Pancreas (tissue), 10 donors: ENCODE measurements at regions of chr11 and their contacts with region 1.

Region 1: DNA sequence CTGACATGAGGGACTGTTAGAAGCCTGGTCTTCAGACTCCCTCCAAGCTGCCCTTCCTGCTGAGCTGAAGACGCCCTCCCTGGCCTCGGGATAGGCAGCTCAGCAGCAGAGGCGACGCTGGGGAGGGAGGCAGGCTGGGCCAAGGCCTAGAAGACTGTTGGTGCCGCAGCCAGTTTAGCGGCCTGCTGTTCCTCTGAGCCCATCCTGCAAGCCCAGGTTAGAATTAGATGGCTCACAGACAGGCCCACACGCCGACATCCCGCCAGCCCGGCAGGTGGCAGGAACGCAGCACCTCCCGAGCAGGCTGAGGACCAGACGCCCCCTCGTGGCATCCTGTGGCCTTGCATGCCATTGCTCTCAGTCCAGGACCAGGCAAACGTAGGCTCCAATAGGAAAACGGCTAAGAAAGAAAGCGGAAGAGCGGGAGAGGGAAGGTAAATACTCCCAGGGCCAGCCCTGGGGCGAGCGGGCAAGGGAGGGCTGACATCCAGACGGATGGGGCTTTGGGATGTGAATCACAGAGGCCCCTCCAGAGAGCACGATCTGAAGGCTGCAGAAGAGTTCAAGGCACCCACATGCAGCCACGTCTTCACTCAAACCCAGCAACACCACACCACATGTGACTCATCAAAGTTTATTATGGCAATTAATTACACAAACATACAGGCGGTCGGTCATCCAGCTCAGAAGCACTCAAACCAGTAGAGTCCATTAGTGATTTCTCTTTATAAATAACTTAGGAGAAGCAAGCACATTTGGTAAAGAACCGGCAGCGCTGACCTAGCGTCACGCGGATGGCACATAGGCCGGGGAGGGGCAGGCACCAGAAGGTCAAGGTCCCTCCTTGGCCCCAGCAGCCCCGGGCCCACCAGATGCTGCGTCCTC is 27.6 kb downstream of the CD5 start:
- DNase-seq: peak; percentile 83 to 95 (median 91)
- ATAC-seq: peak; percentile 89 to 97 (median 94)
- H3K4me3 ChIP-seq: no peak overlapping the region
- H3K27ac ChIP-seq: peak overlapping the region in 2 of 4 donors; percentile 42 to 71
- H3K4me1 ChIP-seq: peaks cover 0 to 7% (median 0%) of the 10 kb centered on the region in 3 donors
- H3K27me3 ChIP-seq: no peaks in the 10 kb centered on the region
- CTCF ChIP-seq: peak; percentile 97 to 99 (median 98)

Region 2: DNA sequence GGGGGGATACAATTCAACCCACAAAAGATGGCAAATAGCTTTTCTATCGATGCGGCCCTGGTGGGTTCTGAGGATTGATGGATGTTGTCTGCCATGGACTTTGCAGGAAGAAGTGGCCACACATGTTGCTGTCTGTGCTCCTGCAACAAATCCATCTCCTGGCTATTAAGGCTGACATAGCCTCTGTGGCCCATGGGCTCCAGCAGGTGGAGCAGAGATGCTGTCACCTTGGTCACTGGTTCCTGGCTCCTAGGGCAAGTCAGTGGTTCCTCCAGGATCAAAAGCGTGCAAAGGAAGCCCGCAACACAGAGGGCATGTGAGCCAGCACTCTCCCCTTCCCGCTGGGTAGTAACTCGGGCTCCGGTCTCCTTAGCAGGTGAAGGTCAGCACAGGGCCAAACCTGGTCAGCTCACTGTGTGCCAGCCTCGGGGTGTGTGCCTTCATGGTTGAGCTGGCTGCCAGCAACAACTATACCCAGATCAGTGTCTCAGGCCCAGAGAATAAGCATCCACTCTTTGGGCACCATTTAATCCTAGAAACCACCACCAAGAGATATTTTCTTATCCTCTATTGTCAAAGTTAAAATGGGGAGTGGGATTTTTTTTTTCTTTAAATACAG is 304.2 kb before region 1 on chr11:
- intact Hi-C with region 1: loop called in 1 of 3 experiments (anchors 5 kb)
- DNase-seq: no peak
- ATAC-seq: no peak
- H3K4me3 ChIP-seq: no peak overlapping the region
- H3K27ac ChIP-seq: no peak overlapping the region
- H3K4me1 ChIP-seq: no peaks in the 10 kb centered on the region
- H3K27me3 ChIP-seq: no peaks in the 10 kb centered on the region
- CTCF ChIP-seq: no peak

Region 3: DNA sequence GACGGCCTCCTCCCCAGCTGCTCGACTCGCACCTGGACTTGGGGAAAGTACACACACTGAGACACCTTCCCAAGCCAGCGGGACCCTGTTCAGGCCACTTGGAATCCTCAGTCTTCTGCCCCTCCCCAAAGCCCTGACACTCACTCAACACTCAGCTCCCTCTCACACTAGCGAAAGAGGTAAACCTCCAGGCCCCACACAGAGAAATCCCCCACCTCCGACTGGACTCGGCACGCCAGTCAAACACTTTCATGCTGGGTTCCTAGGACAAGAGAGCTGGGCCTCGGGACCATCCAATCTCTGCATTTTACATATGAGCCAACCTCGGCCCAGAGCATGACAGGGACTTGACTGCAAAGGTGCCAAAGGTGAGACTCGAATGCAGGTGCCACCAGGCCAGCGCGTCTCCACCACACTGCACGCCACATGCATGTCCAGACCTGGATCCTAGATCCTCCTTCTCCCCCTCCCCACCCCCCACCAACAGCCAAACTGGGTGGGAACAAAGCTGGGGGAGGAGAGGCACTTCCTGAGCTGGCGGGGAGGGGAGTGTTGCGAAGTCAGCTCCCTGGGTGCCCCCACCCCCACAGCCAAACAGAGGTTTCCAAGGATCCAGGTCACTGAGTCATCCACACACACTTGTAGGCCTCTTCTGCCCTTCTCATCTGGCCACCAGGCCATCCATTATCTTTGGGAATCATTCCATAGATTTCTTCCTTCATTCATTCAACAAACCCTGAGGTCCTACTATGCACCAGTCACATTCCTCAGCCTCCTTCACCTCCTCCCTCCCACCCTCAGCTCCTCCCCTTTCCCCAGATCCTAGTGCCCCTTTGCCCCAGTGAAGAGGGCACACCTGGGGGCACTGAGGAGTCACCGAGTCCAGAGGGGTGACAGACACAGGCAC is 38.3 kb before region 1 on chr11:
- intact Hi-C with region 1: no loop called
- DNase-seq: no peak
- ATAC-seq: no peak
- H3K4me3 ChIP-seq: no peak overlapping the region
- H3K27ac ChIP-seq: no peak overlapping the region
- H3K4me1 ChIP-seq: no peaks in the 10 kb centered on the region
- H3K27me3 ChIP-seq: no peaks in the 10 kb centered on the region
- CTCF ChIP-seq: no peak